ENCODE measurements at regions of chr4 and their contacts with region 1.

Region 1: GRCh38 chr4:85968945-85969819 is 390.7 kb downstream of the MAPK10 start:
- DNase-seq: no peak
- ATAC-seq: peak; percentile 69 to 84 (median 80)
- H3K4me3 ChIP-seq: no peak overlapping the region
- H3K27ac ChIP-seq: no peak overlapping the region
- H3K4me1 ChIP-seq: no peaks in the 10 kb centered on the region
- H3K27me3 ChIP-seq: no peaks in the 10 kb centered on the region
- CTCF ChIP-seq: peak; percentile 56 to 57 (median 56)
- POLR2A ChIP-seq: no peak

Region 2: DNA sequence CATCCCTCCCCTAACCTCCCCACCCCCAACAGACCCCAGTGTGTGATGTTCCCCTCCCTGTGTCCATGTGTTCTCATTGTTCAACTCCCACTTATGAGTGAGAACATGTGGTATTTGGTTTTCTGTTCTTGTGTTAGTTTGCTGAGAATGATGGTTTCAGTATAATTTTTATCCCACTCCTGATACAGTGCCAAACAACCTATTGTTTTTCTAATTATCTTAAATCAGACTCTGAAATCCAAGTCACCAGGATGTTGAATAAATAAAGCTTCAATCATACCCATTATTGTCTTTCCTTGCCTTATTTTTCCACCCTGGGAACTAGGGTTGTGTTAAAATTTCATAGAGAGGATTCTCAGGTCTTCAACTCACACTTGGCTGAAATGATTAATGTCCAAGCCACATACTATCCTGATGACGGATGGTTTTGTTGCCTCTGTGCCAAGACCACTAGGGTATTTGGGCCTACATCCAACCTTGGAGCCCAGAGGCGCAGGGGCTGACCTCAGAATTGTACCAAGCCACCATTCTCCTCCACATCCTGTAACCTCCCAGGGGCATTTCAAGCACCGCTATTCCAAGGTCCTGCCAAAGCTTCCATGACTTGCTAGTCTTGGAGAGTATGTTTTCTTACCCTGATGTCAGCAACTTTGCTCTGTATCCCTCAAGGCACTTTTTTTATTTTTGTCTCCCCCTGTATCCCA is 161.8 kb before region 1 on chr4:
- intact Hi-C with region 1: loop called in 1 of 2 experiments (anchors 10 kb)
- DNase-seq: no peak
- ATAC-seq: no peak
- H3K4me3 ChIP-seq: no peak overlapping the region
- H3K27ac ChIP-seq: no peak overlapping the region
- H3K4me1 ChIP-seq: no peaks in the 10 kb centered on the region
- H3K27me3 ChIP-seq: no peaks in the 10 kb centered on the region
- CTCF ChIP-seq: no peak
- POLR2A ChIP-seq: no peak

Region 3: GRCh38 chr4:86141161-86141560 is 172.0 kb after region 1 on chr4:
- intact Hi-C with region 1: no loop called
- DNase-seq: no peak
- ATAC-seq: no peak
- H3K4me3 ChIP-seq: no peak overlapping the region
- H3K27ac ChIP-seq: no peak overlapping the region
- H3K4me1 ChIP-seq: no peaks in the 10 kb centered on the region
- H3K27me3 ChIP-seq: no peaks in the 10 kb centered on the region
- CTCF ChIP-seq: no peak
- POLR2A ChIP-seq: no peak

Measured in right lobe of liver (tissue), 6 donors.